Prostate gland (tissue), 2 donors: ENCODE measurements at regions of chr17 and their contacts with region 1.

Region 1: DNA sequence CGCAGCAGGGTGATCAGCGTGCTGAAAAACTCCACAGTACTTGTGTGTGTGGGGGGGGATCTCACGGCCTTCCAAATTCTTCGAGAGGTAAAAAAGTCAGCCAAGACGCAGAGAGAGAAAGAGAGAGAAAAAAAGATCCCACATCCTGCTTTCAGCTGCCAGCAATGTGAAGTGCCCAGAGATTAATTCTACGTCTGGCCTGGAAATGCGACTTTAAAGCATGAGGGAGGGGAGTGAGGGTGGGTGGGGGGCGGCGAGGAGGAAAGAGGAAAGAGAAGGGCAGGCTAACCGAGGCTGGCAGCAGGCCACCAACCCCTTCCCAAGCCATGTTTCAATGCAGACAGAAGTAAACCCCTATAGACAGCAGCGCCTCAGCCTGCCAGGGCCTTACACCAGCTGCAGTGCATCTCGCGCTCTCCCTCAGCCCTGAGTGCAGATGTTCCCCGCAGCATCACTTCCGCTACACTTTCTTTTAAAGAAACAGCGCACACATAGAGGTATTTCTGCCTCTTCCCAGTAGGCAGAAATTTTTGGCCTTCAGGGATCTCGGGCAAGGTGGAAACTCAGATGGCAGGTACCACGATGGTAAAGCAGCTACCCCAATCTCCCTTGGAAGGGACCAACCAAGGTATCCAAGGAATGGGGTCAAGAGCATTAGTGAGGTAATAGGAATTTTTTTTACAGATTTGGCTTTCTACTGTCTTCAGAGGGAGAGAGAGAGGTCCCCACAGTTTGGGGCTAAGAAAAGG is 87.8 kb downstream of the SMG6 start:
- DNase-seq: no peak
- H3K4me3 ChIP-seq: no peak overlapping the region
- H3K27ac ChIP-seq: peak overlapping the region; percentile 65 to 75
- H3K4me1 ChIP-seq: peaks cover 13% of the 10 kb centered on the region
- H3K27me3 ChIP-seq: no peaks in the 10 kb centered on the region
- CTCF ChIP-seq: no peak
- POLR2A ChIP-seq: no peak

Region 2: DNA sequence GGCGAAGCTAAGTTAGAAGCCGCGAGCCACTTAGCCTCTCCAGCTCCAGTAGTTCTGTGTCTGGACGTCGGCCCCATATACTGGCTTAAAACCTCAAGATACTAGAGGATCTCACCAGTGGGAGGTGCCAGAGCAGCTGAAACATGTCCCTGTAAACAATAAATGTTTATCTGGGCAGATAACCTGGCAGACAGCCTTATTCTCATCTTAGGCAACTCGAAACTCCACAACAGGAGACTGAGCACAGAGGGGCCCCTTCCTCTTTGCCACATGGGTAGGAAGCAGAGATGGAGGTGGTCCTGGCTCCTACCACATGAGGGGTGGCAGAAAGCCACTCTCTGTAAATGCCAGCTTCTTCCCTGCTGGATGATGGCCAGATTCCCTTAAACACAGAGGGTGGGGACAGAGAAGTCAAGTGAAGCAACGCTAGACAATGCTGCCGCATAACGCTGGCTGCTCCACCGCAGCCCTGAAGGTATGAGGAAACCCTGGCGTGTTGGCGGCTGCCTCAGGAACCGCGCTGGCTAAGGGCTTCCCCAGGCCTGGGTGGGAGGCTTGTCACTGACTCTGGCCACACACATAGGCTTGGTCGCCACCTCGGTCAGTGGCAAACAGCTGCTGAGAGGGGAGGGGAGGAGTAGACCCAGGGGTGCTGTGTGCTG is 93.0 kb before region 1 on chr17:
- intact Hi-C with region 1: loop called (anchors 5 kb)
- DNase-seq: peak; percentile 82
- H3K4me3 ChIP-seq: peak overlapping the region in 1 of 2 donors; percentile 6
- H3K27ac ChIP-seq: peak overlapping the region; percentile 68 to 75
- H3K4me1 ChIP-seq: peaks cover 13% of the 10 kb centered on the region
- H3K27me3 ChIP-seq: no peaks in the 10 kb centered on the region
- CTCF ChIP-seq: peak in 3 of 4 experiments; percentile 25 to 45 (median 43)
- POLR2A ChIP-seq: no peak

Region 3: DNA sequence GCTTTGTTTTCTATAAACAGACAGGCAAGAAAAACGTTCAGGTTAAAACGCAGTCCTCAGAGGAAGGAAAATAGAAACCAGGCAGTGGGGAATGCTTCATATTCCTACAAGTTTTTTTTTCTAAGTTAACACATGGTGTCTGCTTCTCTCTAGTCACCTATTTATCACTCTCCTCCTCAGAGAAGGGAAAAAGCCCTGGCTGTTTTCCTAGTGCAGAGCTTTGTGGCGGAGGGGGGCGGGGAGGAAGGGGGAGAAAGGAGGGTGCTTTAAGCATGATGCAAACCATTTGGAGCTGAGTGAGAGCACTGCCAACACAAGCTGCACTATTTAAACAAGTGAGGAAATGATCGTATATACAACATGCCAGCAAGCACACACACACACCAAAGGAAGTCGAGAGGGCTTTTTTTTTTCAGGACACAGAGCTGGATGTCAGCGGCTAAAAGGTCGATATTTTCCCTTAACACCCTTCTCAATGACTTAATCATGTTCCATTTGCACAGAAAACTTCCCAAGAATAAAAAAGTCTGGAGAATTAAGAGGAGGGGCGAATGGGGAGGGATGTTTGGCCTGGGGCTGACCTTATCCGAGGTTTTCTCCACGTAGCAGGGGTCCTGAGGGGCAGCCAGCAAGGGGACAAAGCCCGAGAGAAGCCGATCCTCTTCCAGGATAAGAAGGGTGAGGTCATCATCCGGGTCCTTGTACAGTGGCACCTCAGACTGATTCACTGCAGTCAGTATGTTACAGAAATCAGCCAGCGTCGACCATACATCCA is 43.5 kb before region 1 on chr17:
- intact Hi-C with region 1: loop called (anchors 2 kb)
- DNase-seq: peak; percentile 84
- H3K4me3 ChIP-seq: no peak overlapping the region
- H3K27ac ChIP-seq: peak overlapping the region; percentile 71 to 79
- H3K4me1 ChIP-seq: peaks cover 15% of the 10 kb centered on the region
- H3K27me3 ChIP-seq: no peaks in the 10 kb centered on the region
- CTCF ChIP-seq: peak in 1 of 4 experiments; percentile 3
- POLR2A ChIP-seq: no peak

Region 4: GRCh38 chr17:2179615-2180295 is 36.0 kb before region 1 on chr17:
- intact Hi-C with region 1: loop called (anchors 2 kb)
- DNase-seq: peak; percentile 51
- H3K4me3 ChIP-seq: no peak overlapping the region
- H3K27ac ChIP-seq: peak overlapping the region; percentile 69 to 71
- H3K4me1 ChIP-seq: peaks cover 21% of the 10 kb centered on the region
- H3K27me3 ChIP-seq: no peaks in the 10 kb centered on the region
- CTCF ChIP-seq: no peak
- POLR2A ChIP-seq: no peak